HEK293 (cell line): ENCODE measurements at regions of chr2 and their contacts with region 1.

Region 1: GRCh38 chr2:73290049-73290839 is 3.1 kb downstream of the EGR4 start:
- H3K4me3 ChIP-seq: no peak overlapping the region
- H3K27ac ChIP-seq: no peak overlapping the region
- H3K4me1 ChIP-seq: peaks cover 4% of the 10 kb centered on the region; the same call in 1 of the 2 replicates
- CTCF ChIP-seq: peak; percentile 49; the same call in 1 of the 2 replicates

Region 2: GRCh38 chr2:73269686-73270465 is 20.4 kb before region 1 on chr2:
- CTCF ChIA-PET with region 1: interaction called, 10 read pairs
- POLR2A ChIA-PET with region 1: no interaction called
- H3K4me3 ChIP-seq: peak overlapping the region; percentile 29
- H3K27ac ChIP-seq: peak overlapping the region; percentile 53; the same call in 1 of the 2 replicates
- H3K4me1 ChIP-seq: peaks cover 4% of the 10 kb centered on the region; the same call in 1 of the 2 replicates
- CTCF ChIP-seq: no peak

Region 3: DNA sequence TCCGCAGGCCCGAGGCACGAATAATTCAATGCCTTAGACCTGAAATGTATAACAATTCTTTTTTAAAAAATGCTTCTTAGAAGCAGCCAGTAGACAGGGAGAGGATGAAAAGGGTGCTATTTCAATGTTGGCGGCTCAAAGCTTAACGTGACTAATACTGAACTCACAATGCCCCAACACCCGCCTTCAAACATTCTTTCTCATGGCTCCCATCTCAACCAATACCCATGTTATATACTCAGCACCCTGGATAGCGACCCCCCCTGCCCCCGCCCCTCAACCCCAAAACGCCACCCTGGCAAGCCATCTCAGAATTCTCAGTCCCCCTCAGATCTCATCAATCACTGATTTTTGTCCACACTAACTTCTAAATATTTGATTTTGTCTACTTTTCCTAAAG is 10.4 kb before region 1 on chr2:
- CTCF ChIA-PET with region 1: interaction called, 23 read pairs
- POLR2A ChIA-PET with region 1: no interaction called
- H3K4me3 ChIP-seq: no peak overlapping the region
- H3K27ac ChIP-seq: no peak overlapping the region
- H3K4me1 ChIP-seq: peaks cover 8% of the 10 kb centered on the region
- CTCF ChIP-seq: no peak

Region 4: DNA sequence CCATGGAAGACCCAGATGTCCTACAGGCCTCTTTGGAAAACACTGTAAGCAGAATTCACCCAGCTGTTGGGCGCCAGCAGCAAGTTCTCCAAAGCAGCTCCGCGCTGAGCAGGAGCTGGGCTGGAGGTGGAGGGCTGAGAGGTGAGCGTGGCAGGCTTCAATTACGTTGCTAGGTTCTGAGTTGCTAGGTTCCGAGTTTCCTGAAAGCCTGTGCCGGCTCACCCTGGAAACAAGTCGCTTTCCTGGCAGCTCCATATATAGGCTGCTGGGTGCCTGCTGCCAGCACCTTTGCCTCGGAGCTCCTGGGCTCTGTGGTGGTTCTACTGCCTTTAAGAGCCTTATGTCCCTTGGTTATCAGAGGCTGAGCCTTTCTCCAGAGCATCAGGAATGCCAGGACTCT is 17.5 kb after region 1 on chr2:
- CTCF ChIA-PET with region 1: interaction called, 11 read pairs
- POLR2A ChIA-PET with region 1: no interaction called
- H3K4me3 ChIP-seq: no peak overlapping the region
- H3K27ac ChIP-seq: no peak overlapping the region
- H3K4me1 ChIP-seq: no peaks in the 10 kb centered on the region
- CTCF ChIP-seq: no peak

Region 5: GRCh38 chr2:73494031-73494430 is 203.8 kb after region 1 on chr2:
- CTCF ChIA-PET with region 1: no interaction called
- POLR2A ChIA-PET with region 1: no interaction called
- H3K4me3 ChIP-seq: no peak overlapping the region
- H3K27ac ChIP-seq: no peak overlapping the region
- H3K4me1 ChIP-seq: no peaks in the 10 kb centered on the region
- CTCF ChIP-seq: no peak